ENCODE measurements at regions of chr1 and their contacts with region 1.

Region 1: GRCh38 chr1:15246960-15247614 is at the start of gene FHAD1:
- DNase-seq: peak; percentile 71
- ATAC-seq: peak; percentile 18
- H3K4me3 Mint-ChIP-seq: peak within 1 kb of the TSS; percentile 43
- H3K27ac Mint-ChIP-seq: no peak within 1 kb of the TSS
- H3K4me1 Mint-ChIP-seq: peaks cover 57% of the 10 kb centered on the region
- H3K27me3 Mint-ChIP-seq: peaks cover 49% of the 10 kb centered on the region
- CTCF ChIP-seq: no peak
- total RNA-seq, gene FHAD1: 0.07 to 0.16 TPM

Region 2: DNA sequence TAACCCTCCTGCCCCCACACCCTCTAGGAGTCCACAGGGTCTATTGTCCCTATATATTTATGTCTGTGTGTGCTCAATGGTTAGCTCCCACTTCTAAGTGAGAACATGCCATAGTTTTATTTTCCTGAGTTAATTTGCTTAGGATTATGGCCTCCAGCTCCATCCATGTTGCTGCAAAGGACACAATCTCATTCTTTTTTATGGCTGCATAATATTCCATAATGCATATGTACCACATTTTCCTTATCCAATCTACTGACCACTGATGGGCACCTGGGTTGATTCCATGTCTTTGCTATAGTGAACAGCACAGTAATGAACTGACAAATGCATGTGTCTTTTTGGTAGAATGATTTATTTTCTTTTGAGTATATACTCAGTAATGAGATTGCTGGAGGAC is 13.4 kb before region 1 on chr1:
- CTCF ChIA-PET with region 1: interaction called, 4 read pairs
- POLR2A ChIA-PET with region 1: interaction called, 10 read pairs
- intact Hi-C with region 1: no loop called
- DNase-seq: no peak
- ATAC-seq: no peak
- H3K4me3 Mint-ChIP-seq: no peak overlapping the region
- H3K27ac Mint-ChIP-seq: no peak overlapping the region
- H3K4me1 Mint-ChIP-seq: peaks cover 17% of the 10 kb centered on the region
- H3K27me3 Mint-ChIP-seq: peaks cover 12% of the 10 kb centered on the region
- CTCF ChIP-seq: no peak

Region 3: GRCh38 chr1:15358565-15359133 is 111.6 kb after region 1 on chr1:
- CTCF ChIA-PET with region 1: no interaction called
- POLR2A ChIA-PET with region 1: no interaction called
- intact Hi-C with region 1: no loop called
- DNase-seq: no peak
- ATAC-seq: no peak
- H3K4me3 Mint-ChIP-seq: no peak overlapping the region
- H3K27ac Mint-ChIP-seq: no peak overlapping the region
- H3K4me1 Mint-ChIP-seq: peaks cover 15% of the 10 kb centered on the region
- H3K27me3 Mint-ChIP-seq: no peaks in the 10 kb centered on the region
- CTCF ChIP-seq: no peak

Region 4: GRCh38 chr1:15370781-15371520 is 123.9 kb after region 1 on chr1:
- CTCF ChIA-PET with region 1: no interaction called
- POLR2A ChIA-PET with region 1: no interaction called
- intact Hi-C with region 1: no loop called
- DNase-seq: no peak
- ATAC-seq: no peak
- H3K4me3 Mint-ChIP-seq: no peak overlapping the region
- H3K27ac Mint-ChIP-seq: no peak overlapping the region
- H3K4me1 Mint-ChIP-seq: no peaks in the 10 kb centered on the region
- H3K27me3 Mint-ChIP-seq: peaks cover 2% of the 10 kb centered on the region
- CTCF ChIP-seq: no peak

Measured in activated CD8-positive, alpha-beta T cell treated with anti-CD3 and anti-CD28 coated beads for 36 hours (primary cell).